ENCODE measurements at regions of chr3 and their contacts with region 1.

Region 1: GRCh38 chr3:71033681-71034220 is 549.8 kb downstream of the FOXP1 start:
- DNase-seq: no peak

Region 2: DNA sequence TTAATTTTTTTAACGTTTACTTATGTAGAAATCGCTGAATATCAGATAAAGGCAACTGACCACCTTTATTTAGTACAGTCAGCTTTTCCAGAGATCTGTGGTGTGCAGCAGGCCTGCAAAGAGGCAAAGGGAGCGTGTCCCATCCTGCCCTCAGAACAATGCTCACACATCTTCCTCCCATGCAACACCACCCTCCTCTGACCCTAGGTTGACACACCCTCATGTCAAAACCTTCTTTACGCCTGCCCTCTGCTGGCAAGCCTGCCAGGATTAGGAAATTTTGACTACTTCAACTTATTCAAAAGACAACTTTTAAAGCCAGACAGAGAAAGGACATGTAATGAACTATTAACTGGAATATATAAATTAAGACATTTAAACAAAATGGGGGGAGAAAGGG is 36.0 kb after region 1 on chr3:
- intact Hi-C with region 1: loop called in 1 of 2 experiments (anchors 1 kb)
- DNase-seq: peak; percentile 89

Region 3: GRCh38 chr3:71101014-71101413 is 67.3 kb after region 1 on chr3:
- intact Hi-C with region 1: no loop called
- DNase-seq: no peak